GM12878 (cell line): ENCODE measurements at regions of chr6 and their contacts with region 1.

Region 1: DNA sequence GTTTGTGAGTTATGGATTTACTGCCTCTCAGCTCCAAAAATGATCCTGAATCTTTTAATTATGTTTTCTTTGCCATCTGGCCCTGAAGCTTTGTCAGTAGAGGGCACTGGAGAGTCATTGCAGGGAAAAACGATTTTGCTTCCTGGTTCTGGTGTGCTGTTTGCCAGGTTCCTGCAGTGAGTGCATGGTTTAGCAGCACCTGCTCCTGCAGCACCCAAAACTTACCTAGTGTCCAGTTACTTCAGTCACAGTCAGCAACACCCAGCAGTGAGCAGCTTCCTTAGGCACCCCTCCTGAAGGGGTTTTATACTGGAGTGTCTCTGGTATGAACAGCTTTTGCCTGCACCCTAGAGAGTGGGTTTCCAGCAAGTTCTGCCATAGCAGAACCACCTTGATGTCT is 6.0 kb upstream of the TRIM26 start:
- DNase-seq: peak; percentile 23
- ATAC-seq: peak; percentile 75
- H3K4me3 ChIP-seq: no peak overlapping the region
- H3K27ac ChIP-seq: no peak overlapping the region
- H3K4me1 ChIP-seq: peaks cover 4% of the 10 kb centered on the region
- H3K27me3 ChIP-seq: no peaks in the 10 kb centered on the region; a peak in 1 of 4 replicates
- CTCF ChIP-seq: peak; percentile 91 to 94 (median 94)
- EP300 ChIP-seq: no peak
- POLR2A ChIP-seq: 0 out of 2 replicates have a peak, but pooled peaks have one; percentile 31
- RAD21 ChIP-seq: peak; percentile 83

Region 2: GRCh38 chr6:29989211-29989610 is 230.0 kb before region 1 on chr6:
- CTCF ChIA-PET with region 1: no interaction called
- POLR2A ChIA-PET with region 1: no interaction called
- RAD21 ChIA-PET with region 1: no interaction called
- SMC1A ChIA-PET with region 1: no interaction called
- in situ Hi-C with region 1: no loop called
- intact Hi-C with region 1: no loop called
- DNase-seq: no peak
- ATAC-seq: no peak
- H3K4me3 ChIP-seq: no peak overlapping the region
- H3K27ac ChIP-seq: no peak overlapping the region
- H3K4me1 ChIP-seq: no peaks in the 10 kb centered on the region
- H3K27me3 ChIP-seq: no peaks in the 10 kb centered on the region; a peak in 1 of 4 replicates
- CTCF ChIP-seq: no peak
- EP300 ChIP-seq: no peak
- POLR2A ChIP-seq: no peak
- RAD21 ChIP-seq: no peak

Region 3: GRCh38 chr6:30184417-30185031 is 34.7 kb before region 1 on chr6:
- CTCF ChIA-PET with region 1: interaction called, 3 read pairs
- POLR2A ChIA-PET with region 1: interaction called, 12 read pairs
- RAD21 ChIA-PET with region 1: no interaction called
- SMC1A ChIA-PET with region 1: no interaction called
- in situ Hi-C with region 1: no loop called
- intact Hi-C with region 1: no loop called
- DNase-seq: no peak
- ATAC-seq: no peak; the same call in 1 of the 3 replicates
- H3K4me3 ChIP-seq: no peak overlapping the region
- H3K27ac ChIP-seq: no peak overlapping the region
- H3K4me1 ChIP-seq: no peaks in the 10 kb centered on the region
- H3K27me3 ChIP-seq: no peaks in the 10 kb centered on the region
- CTCF ChIP-seq: no peak
- EP300 ChIP-seq: no peak
- POLR2A ChIP-seq: peak; percentile 38; the same call in 1 of the 2 replicates
- RAD21 ChIP-seq: no peak

Region 4: DNA sequence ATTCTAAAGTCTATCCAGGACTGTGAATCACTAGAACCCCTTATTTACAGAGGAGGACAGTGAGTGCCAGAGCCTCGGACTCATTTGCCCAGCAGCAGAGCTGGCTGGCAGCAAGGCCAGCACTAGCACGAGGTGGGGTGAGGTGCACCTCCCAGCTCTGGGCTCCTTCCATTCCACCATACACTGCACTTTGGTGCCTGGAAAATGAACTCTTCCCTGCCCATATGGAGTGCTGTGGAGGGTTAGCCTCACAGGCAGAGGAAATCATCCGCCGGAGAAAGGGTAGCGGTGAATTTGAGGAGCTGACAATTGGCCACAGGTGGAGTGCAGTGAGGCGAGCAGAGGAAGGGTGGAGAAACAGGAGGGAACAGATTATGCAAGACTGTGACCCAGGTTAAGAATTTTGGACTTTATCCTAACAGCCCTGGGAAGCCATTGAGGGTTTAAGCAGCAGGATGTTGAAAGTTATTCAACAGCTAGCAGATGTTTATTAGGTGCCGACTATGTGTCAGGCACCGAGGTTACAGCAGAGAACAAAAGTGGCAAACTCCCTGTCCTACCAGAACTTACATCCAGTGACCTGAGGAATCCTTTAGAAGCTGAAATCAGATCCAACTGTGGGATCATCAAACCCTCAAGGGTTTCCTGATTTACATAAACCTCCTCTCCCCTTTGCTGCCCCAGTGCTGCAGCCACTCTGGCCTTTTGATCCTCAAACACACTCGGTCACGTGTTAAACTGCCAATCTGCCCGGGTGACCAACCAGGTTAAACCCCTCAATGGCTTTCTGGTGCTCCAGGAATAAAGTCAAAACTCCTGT is 12.2 kb before region 1 on chr6:
- CTCF ChIA-PET with region 1: interaction called, 10 read pairs
- POLR2A ChIA-PET with region 1: interaction called, 3 read pairs
- RAD21 ChIA-PET with region 1: no interaction called
- SMC1A ChIA-PET with region 1: interaction called, 5 read pairs
- in situ Hi-C with region 1: no loop called
- intact Hi-C with region 1: no loop called
- DNase-seq: no peak
- ATAC-seq: no peak
- H3K4me3 ChIP-seq: 0 out of 2 replicates have a peak overlapping the region, but pooled peaks have one; percentile 1
- H3K27ac ChIP-seq: no peak overlapping the region
- H3K4me1 ChIP-seq: peaks cover 50% of the 10 kb centered on the region
- H3K27me3 ChIP-seq: no peaks in the 10 kb centered on the region
- CTCF ChIP-seq: no peak
- EP300 ChIP-seq: no peak
- POLR2A ChIP-seq: no peak
- RAD21 ChIP-seq: no peak

Region 5: GRCh38 chr6:30344868-30345671 is 125.8 kb after region 1 on chr6 and contains the start of gene RPP21:
- CTCF ChIA-PET with region 1: interaction called, 56 read pairs
- POLR2A ChIA-PET with region 1: interaction called, 3 read pairs
- RAD21 ChIA-PET with region 1: no interaction called
- SMC1A ChIA-PET with region 1: interaction called, 4 read pairs
- in situ Hi-C with region 1: no loop called
- intact Hi-C with region 1: loop called (anchors 5 kb)
- DNase-seq: no peak
- ATAC-seq: peak; percentile 99
- H3K4me3 ChIP-seq: peak within 1 kb of the TSS; percentile 75
- H3K27ac ChIP-seq: peak within 1 kb of the TSS; percentile 66; the same call in 1 of the 2 replicates
- H3K4me1 ChIP-seq: peaks cover 13% of the 10 kb centered on the region
- H3K27me3 ChIP-seq: no peaks in the 10 kb centered on the region
- CTCF ChIP-seq: no peak
- EP300 ChIP-seq: no peak
- POLR2A ChIP-seq: peak; percentile 98
- RAD21 ChIP-seq: no peak
- polyA plus RNA-seq, gene RPP21: 39.3 to 44.3 TPM

Region 6: DNA sequence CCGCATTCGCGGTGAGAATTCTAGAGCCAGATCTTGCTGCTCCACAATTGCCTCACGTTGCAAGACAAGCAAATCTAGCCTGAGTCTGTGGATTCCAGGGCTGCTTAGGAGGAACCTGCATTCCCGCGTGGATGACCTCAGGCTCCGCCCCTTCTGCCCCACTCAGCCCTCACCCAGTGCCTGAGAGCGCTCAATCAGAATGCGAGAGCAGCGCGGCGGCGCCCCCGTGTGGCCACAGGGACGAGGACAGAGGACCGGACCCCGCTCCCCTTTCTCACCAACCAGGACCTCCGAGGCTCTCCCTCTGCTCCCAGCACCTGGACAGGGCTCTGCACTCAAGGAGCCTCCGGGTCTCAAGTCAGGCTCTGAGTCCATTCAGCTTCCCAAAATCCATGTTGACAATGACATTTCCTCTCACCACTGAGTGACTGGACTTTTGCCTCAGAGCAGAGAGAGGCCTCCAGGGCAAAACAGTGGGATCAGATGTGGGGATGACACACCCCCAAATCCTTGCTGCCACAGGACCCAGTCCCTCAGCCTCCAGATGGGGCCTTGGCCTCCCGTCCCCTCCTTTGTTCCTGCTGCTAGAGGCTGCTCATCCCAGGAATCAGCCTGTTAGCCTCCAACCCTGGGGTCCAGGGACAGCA is 177.7 kb after region 1 on chr6:
- CTCF ChIA-PET with region 1: interaction called, 40 read pairs
- POLR2A ChIA-PET with region 1: no interaction called
- RAD21 ChIA-PET with region 1: interaction called, 14 read pairs
- SMC1A ChIA-PET with region 1: interaction called, 10 read pairs
- in situ Hi-C with region 1: no loop called
- intact Hi-C with region 1: loop called (anchors 2 kb)
- DNase-seq: peak; percentile 9
- ATAC-seq: peak; percentile 100
- H3K4me3 ChIP-seq: no peak overlapping the region
- H3K27ac ChIP-seq: no peak overlapping the region
- H3K4me1 ChIP-seq: no peaks in the 10 kb centered on the region
- H3K27me3 ChIP-seq: peaks cover 0 to 3% of the 10 kb centered on the region in 2 experiments; a peak in 3 of 4 replicates
- CTCF ChIP-seq: peak; percentile 87 to 90 (median 89)
- EP300 ChIP-seq: no peak
- POLR2A ChIP-seq: no peak
- RAD21 ChIP-seq: peak; percentile 88

Region 7: DNA sequence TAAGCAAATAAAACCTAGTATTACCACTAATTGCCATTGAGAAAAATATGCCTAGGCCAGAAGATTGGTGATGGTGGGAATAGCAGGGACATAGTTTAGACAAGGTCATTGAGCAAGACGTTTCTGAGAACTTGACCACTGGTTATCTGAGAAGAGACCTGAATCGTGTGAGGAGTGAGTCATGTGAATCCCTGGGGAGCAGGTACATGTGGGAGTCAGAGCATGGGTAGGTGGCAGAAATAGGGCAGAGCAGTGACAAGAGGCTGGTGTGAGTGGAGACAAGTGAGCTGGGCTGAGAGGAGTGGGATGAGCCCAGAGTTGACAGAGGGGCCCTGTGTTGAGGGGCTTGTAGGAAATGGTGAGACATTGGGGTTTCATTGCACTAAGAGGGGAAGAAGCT is 1200.6 kb after region 1 on chr6:
- CTCF ChIA-PET with region 1: no interaction called
- POLR2A ChIA-PET with region 1: no interaction called
- RAD21 ChIA-PET with region 1: no interaction called
- SMC1A ChIA-PET with region 1: no interaction called
- in situ Hi-C with region 1: no loop called
- intact Hi-C with region 1: no loop called
- DNase-seq: no peak
- ATAC-seq: peak; percentile 33; the same call in 2 of the 3 replicates
- H3K4me3 ChIP-seq: no peak overlapping the region
- H3K27ac ChIP-seq: no peak overlapping the region
- H3K4me1 ChIP-seq: no peaks in the 10 kb centered on the region
- H3K27me3 ChIP-seq: no peaks in the 10 kb centered on the region
- CTCF ChIP-seq: no peak
- EP300 ChIP-seq: no peak
- POLR2A ChIP-seq: no peak
- RAD21 ChIP-seq: no peak